Naive thymus-derived CD4-positive, alpha-beta T cell (primary cell): ENCODE measurements at regions of chr2 and their contacts with region 1.

Region 1: GRCh38 chr2:88919087-88919738 is 227.7 kb downstream of the RPIA start:
- DNase-seq: peak in 4 of 9 donors; percentile 20 to 32 (median 22)
- ATAC-seq: peak; percentile 24
- H3K4me3 ChIP-seq: no peak overlapping the region
- H3K4me3 Mint-ChIP-seq: peak overlapping the region in 3 of 10 donors; percentile 0 to 13 (median 6)
- H3K27ac ChIP-seq: no peak overlapping the region
- H3K27ac Mint-ChIP-seq: peak overlapping the region in 1 of 9 donors; percentile 38
- H3K4me1 ChIP-seq: no peaks in the 10 kb centered on the region
- H3K4me1 Mint-ChIP-seq: peaks cover 0 to 5% (median 0%) of the 10 kb centered on the region in 7 donors
- H3K27me3 ChIP-seq: no peaks in the 10 kb centered on the region
- H3K27me3 Mint-ChIP-seq: peaks cover 7 to 26% (median 11%) of the 10 kb centered on the region in 5 donors

Region 2: DNA sequence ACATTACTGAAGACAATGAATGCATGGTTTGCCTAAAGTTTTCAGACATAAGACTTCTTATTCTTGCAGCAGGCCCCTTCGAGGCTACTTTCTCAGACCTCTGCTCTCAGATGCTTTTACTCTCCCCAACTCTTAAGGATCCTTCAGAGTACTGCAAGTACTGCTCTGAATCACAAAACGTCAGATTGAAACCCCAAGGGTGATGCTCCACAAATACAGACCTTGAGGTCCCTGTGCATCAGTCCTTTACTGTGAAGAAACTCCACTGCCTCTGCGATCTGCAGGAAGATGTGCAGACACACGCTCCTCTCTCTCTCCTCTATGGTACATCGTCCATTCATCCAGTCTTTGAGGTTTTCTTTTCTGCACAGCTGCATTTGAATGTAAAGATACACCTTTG is 344.8 kb before region 1 on chr2:
- CTCF ChIA-PET with region 1: no interaction called
- POLR2A ChIA-PET with region 1: no interaction called
- intact Hi-C with region 1: no loop called
- DNase-seq: no peak
- ATAC-seq: no peak
- H3K4me3 ChIP-seq: no peak overlapping the region
- H3K4me3 Mint-ChIP-seq: no peak overlapping the region
- H3K27ac ChIP-seq: no peak overlapping the region
- H3K27ac Mint-ChIP-seq: peak overlapping the region in 1 of 9 donors; percentile 47
- H3K4me1 ChIP-seq: no peaks in the 10 kb centered on the region
- H3K4me1 Mint-ChIP-seq: peaks cover 0 to 17% (median 0%) of the 10 kb centered on the region in 7 donors
- H3K27me3 ChIP-seq: no peaks in the 10 kb centered on the region
- H3K27me3 Mint-ChIP-seq: no peaks in the 10 kb centered on the region

Region 3: GRCh38 chr2:88880441-88880953 is 38.7 kb before region 1 on chr2:
- CTCF ChIA-PET with region 1: no interaction called
- POLR2A ChIA-PET with region 1: no interaction called
- intact Hi-C with region 1: loop called (anchors 1 kb)
- DNase-seq: peak in 7 of 9 donors; percentile 26 to 61 (median 45)
- ATAC-seq: peak; percentile 75
- H3K4me3 ChIP-seq: no peak overlapping the region
- H3K4me3 Mint-ChIP-seq: peak overlapping the region in 3 of 10 donors; percentile 16 to 61 (median 46)
- H3K27ac ChIP-seq: no peak overlapping the region
- H3K27ac Mint-ChIP-seq: peak overlapping the region in 1 of 9 donors; percentile 27
- H3K4me1 ChIP-seq: no peaks in the 10 kb centered on the region
- H3K4me1 Mint-ChIP-seq: peaks cover 0 to 8% (median 0%) of the 10 kb centered on the region in 7 donors
- H3K27me3 ChIP-seq: no peaks in the 10 kb centered on the region
- H3K27me3 Mint-ChIP-seq: peaks cover 10 to 21% (median 13%) of the 10 kb centered on the region in 5 donors